Posterior vena cava (tissue), 2 donors: ENCODE measurements at regions of chr11 and their contacts with region 1.

Region 1: DNA sequence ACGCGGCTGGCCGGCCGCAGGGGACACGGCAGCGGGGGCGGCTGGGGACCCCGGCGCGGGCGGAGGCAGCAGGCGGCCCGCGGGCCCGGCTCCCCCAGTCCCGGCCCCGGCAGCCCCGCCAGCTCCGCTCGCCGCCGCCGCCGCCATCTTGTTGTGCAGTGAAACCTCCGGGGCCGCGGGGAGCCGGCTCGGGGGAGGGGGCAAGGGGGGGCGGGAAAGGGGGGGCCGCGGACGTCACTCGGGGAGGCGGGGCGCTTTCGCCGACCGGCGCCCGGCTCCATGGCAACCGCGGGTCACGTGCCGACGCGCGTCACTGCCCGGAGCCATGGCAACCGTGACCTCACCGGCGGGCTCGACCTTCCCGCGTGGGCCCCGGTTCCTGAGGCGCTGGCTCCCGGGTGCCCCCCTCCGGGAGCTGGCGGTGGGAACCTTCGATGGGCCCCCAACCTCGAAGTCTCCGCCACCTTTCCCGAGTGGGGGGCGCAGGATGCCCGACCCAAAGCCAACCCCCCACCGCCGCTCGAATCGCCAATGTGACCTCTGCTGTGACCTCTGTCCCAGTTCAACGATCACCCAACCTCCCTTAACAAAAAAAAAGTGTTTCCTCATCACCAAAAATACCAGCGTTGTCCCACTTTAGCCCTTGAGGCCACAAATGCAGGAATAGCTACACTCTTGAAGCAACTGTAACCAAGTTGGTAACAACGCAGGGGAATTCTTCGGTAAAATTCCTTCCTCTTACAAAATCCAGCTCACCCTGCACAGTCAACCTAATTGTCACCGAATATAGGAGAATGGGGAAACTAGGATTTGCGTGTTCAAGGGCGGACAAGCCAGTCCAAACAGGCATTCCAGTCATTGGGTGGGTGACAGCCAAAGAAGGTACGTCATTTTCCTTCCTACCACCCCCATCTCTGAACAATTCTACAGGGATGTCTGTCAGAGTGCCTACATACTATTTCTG is at the start of gene SIK3:
- DNase-seq: peak; percentile 98
- total RNA-seq, gene SIK3: 43.8 to 53.4 TPM

Region 2: GRCh38 chr11:116890193-116890592 is 208.4 kb before region 1 on chr11:
- intact Hi-C with region 1: loop called (anchors 5 kb)
- DNase-seq: no peak

Region 3: DNA sequence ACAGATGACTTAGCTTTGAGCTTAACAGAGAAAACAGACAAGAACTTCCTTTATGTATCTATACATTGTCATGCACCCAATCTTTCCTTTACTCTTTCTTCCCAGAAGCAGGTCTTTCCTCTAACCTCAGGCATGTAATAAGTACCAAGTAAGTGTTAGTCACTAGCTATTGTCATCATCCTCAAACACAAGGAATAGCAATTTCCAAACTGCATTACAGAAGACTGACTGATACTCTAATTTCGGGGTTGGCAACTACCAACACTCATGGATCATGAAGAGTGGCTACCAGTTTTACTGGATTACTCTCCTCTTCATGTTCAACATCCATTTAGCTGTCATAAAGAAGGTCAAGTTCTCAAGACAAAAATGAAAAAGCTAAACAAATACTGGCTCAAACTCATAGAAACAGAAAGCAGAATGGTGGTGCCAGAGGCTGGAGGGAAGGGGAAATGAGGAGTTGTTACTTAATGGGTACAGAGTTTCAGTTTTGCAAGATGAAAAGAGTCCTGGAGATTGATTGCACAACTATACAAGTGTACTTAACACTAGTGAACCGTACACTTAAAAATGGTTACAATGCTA is 111.9 kb before region 1 on chr11:
- intact Hi-C with region 1: loop called in 1 of 2 experiments (anchors 10 kb)
- DNase-seq: no peak

Region 4: DNA sequence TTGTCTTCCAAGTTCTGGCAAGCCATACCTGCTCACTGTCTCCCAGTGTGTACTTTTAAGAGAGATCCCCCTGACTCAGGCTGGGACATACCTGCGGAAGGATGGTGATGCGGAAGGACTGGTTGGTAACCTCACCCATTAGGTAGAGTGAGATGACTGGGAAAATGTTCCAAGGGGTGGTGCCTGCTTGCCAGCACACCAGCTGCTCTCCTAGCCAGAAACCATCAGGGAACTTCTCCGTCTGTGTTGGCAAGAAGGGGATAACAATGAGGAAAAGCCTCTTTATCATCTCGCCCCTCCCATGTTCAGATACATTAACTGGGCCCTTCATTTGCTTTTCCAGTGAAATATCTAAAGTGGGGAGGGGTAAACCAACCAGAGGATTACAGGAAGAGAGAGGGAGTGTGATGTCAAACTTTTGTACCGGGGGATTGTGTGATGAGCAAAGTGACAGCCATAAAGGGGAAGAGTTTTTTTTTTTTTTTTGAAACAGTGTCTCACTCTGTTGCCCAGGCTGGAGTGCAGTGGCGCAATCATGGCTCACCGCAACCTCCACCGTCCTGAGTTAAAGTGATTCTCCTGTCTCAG is 192.4 kb after region 1 on chr11 and contains the start of gene BACE1-AS:
- intact Hi-C with region 1: no loop called
- DNase-seq: no peak
- total RNA-seq, gene BACE1-AS: 9.7 to 10.1 TPM